PC-9 (cell line): ENCODE measurements at regions of chr6 and their contacts with region 1.

Region 1: GRCh38 chr6:74805916-74806696 is 399.7 kb downstream of the COL12A1 start:
- DNase-seq: no peak
- H3K4me3 ChIP-seq: no peak overlapping the region
- H3K27ac ChIP-seq: no peak overlapping the region
- H3K4me1 ChIP-seq: no peaks in the 10 kb centered on the region
- H3K27me3 ChIP-seq: no peaks in the 10 kb centered on the region
- CTCF ChIP-seq: no peak

Region 2: DNA sequence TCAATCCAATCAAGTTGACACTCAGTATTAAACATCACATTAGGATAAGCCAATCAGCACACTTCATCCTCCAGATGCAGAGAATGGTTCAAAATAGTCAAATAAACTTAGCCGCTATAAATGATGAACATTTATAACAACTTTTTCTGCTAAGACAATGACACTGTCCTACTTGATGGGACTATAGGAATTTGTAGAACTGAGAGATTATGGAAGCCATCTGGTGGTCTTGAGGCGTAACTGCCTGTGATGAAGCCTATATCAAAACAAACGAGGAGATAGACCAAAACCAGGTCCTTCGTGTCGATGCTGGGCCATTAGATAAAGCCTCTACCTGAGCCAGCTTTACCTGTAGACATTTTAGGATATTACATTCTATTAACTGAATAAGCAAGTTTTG is 231.3 kb before region 1 on chr6:
- CTCF ChIA-PET with region 1: no interaction called
- POLR2A ChIA-PET with region 1: interaction called, 24 read pairs
- intact Hi-C with region 1: no loop called
- DNase-seq: no peak
- H3K4me3 ChIP-seq: no peak overlapping the region
- H3K27ac ChIP-seq: no peak overlapping the region
- H3K4me1 ChIP-seq: peaks cover 8% of the 10 kb centered on the region
- H3K27me3 ChIP-seq: no peaks in the 10 kb centered on the region
- CTCF ChIP-seq: peak; percentile 69

Region 3: DNA sequence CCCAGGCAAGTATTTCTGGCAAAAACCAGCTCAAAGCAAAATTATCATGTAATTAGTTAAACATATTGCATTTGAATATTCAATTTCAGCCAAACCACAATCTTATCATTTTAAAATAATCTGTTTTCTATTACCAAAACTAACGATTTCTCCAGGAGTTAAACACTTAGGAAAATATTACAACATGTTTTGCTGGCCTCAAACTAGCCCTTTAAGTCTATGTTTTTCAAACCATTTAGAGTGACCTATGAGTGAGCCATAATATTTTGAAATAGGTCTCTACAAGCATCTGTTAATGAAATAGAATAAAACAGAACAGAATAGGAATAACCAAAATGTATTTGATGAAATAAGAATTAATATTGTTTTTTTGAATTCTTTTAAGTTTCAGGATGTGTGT is 28.9 kb after region 1 on chr6:
- CTCF ChIA-PET with region 1: no interaction called
- POLR2A ChIA-PET with region 1: interaction called, 12 read pairs
- intact Hi-C with region 1: no loop called
- DNase-seq: no peak
- H3K4me3 ChIP-seq: no peak overlapping the region
- H3K27ac ChIP-seq: no peak overlapping the region
- H3K4me1 ChIP-seq: no peaks in the 10 kb centered on the region
- H3K27me3 ChIP-seq: no peaks in the 10 kb centered on the region
- CTCF ChIP-seq: no peak